CD4-positive, alpha-beta memory T cell (primary cell): ENCODE measurements at regions of chr5 and their contacts with region 1.

Region 1: DNA sequence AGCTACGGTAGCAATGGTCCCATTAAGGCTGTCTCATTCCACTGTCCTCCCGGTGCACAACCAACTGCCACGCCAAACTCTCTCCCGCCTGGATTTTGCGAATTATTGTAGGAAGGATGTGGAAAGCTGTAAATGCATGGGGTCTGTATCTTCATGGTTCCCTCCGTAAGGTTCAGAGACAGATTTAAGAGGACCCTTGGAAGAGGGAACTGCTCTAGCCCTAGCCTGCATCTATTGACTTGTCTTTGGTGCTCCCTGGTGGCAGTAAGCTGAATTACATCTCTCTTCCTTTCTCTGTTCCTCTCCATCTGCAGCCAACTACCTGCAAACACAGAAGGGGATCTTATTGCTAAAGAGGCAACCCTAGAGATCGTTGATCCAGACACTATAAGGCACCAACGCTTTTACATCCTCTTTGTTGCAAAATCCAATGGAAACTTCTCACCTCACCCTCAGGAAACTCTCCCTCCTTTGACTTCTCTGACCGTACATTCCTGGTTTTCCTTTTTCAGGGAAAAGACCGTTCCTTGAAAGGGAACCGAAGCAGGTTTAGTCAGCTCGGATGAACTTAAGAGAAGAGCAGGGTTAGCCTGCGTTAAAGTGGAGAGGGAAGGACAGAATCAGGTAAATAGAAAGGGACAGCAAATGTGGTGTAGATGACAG is 11.9 kb downstream of the CAPSL start:
- DNase-seq: peak; percentile 63 to 78 (median 72)
- H3K4me3 ChIP-seq: no peak overlapping the region
- H3K4me3 Mint-ChIP-seq: peak overlapping the region in 6 of 8 donors; percentile 60 to 82 (median 76)
- H3K27ac ChIP-seq: no peak overlapping the region
- H3K27ac Mint-ChIP-seq: peak overlapping the region in 3 of 7 donors; percentile 1 to 80 (median 49)
- H3K4me1 ChIP-seq: peaks cover 20% of the 10 kb centered on the region
- H3K4me1 Mint-ChIP-seq: peaks cover 26 to 38% (median 34%) of the 10 kb centered on the region in 4 donors
- H3K27me3 ChIP-seq: no peaks in the 10 kb centered on the region
- H3K27me3 Mint-ChIP-seq: peaks cover 5 to 7% of the 10 kb centered on the region in 2 donors

Region 2: GRCh38 chr5:35089334-35090314 is 836.9 kb before region 1 on chr5:
- CTCF ChIA-PET with region 1: interaction called, 121 read pairs
- POLR2A ChIA-PET with region 1: no interaction called
- intact Hi-C with region 1: no loop called
- DNase-seq: peak; percentile 44 to 53 (median 46)
- H3K4me3 ChIP-seq: no peak overlapping the region
- H3K4me3 Mint-ChIP-seq: no peak overlapping the region
- H3K27ac ChIP-seq: no peak overlapping the region
- H3K27ac Mint-ChIP-seq: peak overlapping the region in 1 of 7 donors; percentile 32
- H3K4me1 ChIP-seq: no peaks in the 10 kb centered on the region
- H3K4me1 Mint-ChIP-seq: no peaks in the 10 kb centered on the region
- H3K27me3 ChIP-seq: no peaks in the 10 kb centered on the region
- H3K27me3 Mint-ChIP-seq: peaks cover 4 to 5% of the 10 kb centered on the region in 2 donors

Region 3: DNA sequence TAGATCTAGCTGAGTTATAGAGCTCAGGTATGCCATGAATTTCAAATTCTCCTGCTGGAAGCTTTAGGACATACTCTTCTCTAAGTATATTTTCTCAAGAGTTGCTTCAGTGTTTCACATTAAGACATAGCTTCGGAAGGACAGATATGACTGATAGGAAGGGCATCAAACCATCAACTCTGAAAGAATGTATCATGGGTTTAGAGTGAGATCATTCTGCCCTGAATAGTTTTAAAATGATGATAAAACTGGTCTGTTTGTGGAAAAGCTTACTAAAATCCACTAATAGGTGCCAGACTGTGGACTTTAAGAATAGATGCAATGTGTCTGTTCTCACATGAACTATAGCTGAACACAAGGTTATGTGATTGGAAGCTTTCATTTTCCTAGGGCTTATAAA is 300.4 kb before region 1 on chr5:
- CTCF ChIA-PET with region 1: interaction called, 142 read pairs
- POLR2A ChIA-PET with region 1: no interaction called
- intact Hi-C with region 1: no loop called
- DNase-seq: no peak
- H3K4me3 ChIP-seq: no peak overlapping the region
- H3K4me3 Mint-ChIP-seq: no peak overlapping the region
- H3K27ac ChIP-seq: no peak overlapping the region
- H3K27ac Mint-ChIP-seq: no peak overlapping the region
- H3K4me1 ChIP-seq: no peaks in the 10 kb centered on the region
- H3K4me1 Mint-ChIP-seq: peaks cover 3 to 16% (median 7%) of the 10 kb centered on the region in 4 donors
- H3K27me3 ChIP-seq: no peaks in the 10 kb centered on the region
- H3K27me3 Mint-ChIP-seq: no peaks in the 10 kb centered on the region

Region 4: GRCh38 chr5:35761541-35761940 is 165.0 kb before region 1 on chr5:
- CTCF ChIA-PET with region 1: interaction called, 11 read pairs
- POLR2A ChIA-PET with region 1: no interaction called
- intact Hi-C with region 1: no loop called
- DNase-seq: peak in 3 of 5 donors; percentile 38 to 43 (median 43)
- H3K4me3 ChIP-seq: no peak overlapping the region
- H3K4me3 Mint-ChIP-seq: peak overlapping the region in 5 of 8 donors; percentile 2 to 43 (median 22)
- H3K27ac ChIP-seq: no peak overlapping the region
- H3K27ac Mint-ChIP-seq: peak overlapping the region; percentile 1 to 76 (median 53)
- H3K4me1 ChIP-seq: peaks cover 9% of the 10 kb centered on the region
- H3K4me1 Mint-ChIP-seq: peaks cover 10 to 27% (median 20%) of the 10 kb centered on the region in 4 donors
- H3K27me3 ChIP-seq: no peaks in the 10 kb centered on the region
- H3K27me3 Mint-ChIP-seq: no peaks in the 10 kb centered on the region

Region 5: GRCh38 chr5:35822511-35822910 is 104.0 kb before region 1 on chr5:
- CTCF ChIA-PET with region 1: interaction called, 14 read pairs
- POLR2A ChIA-PET with region 1: interaction called, 14 read pairs
- intact Hi-C with region 1: no loop called
- DNase-seq: peak; percentile 59 to 70 (median 66)
- H3K4me3 ChIP-seq: peak overlapping the region in 1 of 2 donors; percentile 11
- H3K4me3 Mint-ChIP-seq: peak overlapping the region; percentile 27 to 95 (median 72)
- H3K27ac ChIP-seq: peak overlapping the region; percentile 46
- H3K27ac Mint-ChIP-seq: peak overlapping the region; percentile 74 to 98 (median 92)
- H3K4me1 ChIP-seq: peaks cover 99% of the 10 kb centered on the region
- H3K4me1 Mint-ChIP-seq: peaks cover 77 to 91% (median 84%) of the 10 kb centered on the region in 4 donors
- H3K27me3 ChIP-seq: no peaks in the 10 kb centered on the region
- H3K27me3 Mint-ChIP-seq: no peaks in the 10 kb centered on the region

Region 6: DNA sequence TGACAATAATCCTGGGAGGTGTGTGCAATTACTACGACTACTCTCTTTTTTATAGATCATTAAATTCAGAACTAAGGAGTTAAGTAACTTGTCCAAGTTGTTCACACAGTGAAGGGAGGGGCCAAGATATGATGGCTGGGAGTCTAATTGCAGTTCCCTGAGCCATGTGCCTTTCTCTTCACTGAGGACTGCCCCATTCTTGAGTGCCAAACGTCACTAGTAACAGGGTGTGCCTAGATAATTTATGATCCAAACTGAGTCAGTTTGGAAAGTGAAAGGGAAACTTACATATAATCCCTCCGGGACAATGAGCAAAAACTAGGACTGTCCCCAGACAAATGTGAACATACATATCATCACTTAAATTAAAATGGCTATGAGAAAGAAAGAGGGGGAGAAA is 49.6 kb before region 1 on chr5:
- CTCF ChIA-PET with region 1: no interaction called
- POLR2A ChIA-PET with region 1: interaction called, 23 read pairs
- intact Hi-C with region 1: no loop called
- DNase-seq: no peak
- H3K4me3 ChIP-seq: no peak overlapping the region
- H3K4me3 Mint-ChIP-seq: peak overlapping the region in 4 of 8 donors; percentile 3 to 58 (median 31)
- H3K27ac ChIP-seq: peak overlapping the region; percentile 16
- H3K27ac Mint-ChIP-seq: peak overlapping the region; percentile 53 to 89 (median 73)
- H3K4me1 ChIP-seq: peaks cover 57% of the 10 kb centered on the region
- H3K4me1 Mint-ChIP-seq: peaks cover 61 to 81% (median 71%) of the 10 kb centered on the region in 4 donors
- H3K27me3 ChIP-seq: no peaks in the 10 kb centered on the region
- H3K27me3 Mint-ChIP-seq: no peaks in the 10 kb centered on the region